CD4-positive, alpha-beta memory T cell (primary cell): ENCODE measurements at regions of chr22 and their contacts with region 1.

Region 1: DNA sequence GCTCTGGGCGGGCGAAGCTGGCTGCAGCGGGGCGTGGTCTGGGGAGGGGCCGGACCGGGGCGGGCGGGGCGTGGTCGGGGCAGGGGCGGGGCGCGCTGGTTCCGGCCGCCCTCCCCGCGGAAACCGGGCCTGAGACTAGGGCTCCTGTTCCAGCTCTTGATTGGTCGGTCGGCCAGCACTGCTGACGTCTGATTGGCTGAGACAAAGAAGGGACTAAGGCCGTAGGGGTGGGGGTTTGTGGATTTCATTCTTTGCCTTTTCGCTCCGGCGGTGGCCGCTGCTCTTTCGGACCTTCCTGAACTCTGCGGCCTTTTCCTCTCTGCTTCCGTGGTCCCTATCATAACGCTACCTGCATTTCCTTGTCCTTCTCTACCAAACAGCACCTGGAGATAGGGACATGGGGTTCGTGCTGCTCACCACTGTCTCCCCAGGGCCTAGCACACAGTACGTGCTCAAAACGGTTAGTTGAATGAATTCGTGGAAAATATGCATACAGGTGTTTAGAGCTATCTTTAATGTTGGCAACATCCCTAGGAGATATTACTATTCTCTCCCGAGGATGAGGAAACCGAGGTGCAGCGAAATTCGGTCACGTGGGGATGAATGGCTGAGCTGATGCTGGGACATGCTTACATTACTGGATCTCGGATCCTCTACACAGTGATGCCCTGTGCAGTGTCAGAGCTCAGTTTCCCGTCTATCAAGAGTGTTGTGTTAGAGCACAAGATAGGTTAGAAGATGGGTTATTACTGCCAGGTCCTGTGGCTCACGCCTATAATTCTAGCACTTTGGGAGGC is 62.8 kb downstream of the NFAM1 start:
- DNase-seq: peak; percentile 76 to 84 (median 78)
- H3K4me3 ChIP-seq: peak overlapping the region; percentile 25 to 53
- H3K4me3 Mint-ChIP-seq: peak overlapping the region; percentile 85 to 95 (median 89)
- H3K27ac ChIP-seq: peak overlapping the region; percentile 4
- H3K27ac Mint-ChIP-seq: peak overlapping the region; percentile 71 to 90 (median 84)
- H3K4me1 ChIP-seq: peaks cover 18% of the 10 kb centered on the region
- H3K4me1 Mint-ChIP-seq: peaks cover 9 to 25% (median 12%) of the 10 kb centered on the region in 4 donors
- H3K27me3 ChIP-seq: peaks cover 11% of the 10 kb centered on the region
- H3K27me3 Mint-ChIP-seq: peaks cover 7 to 18% of the 10 kb centered on the region in 2 donors

Region 2: GRCh38 chr22:42079319-42080251 is 289.9 kb before region 1 on chr22 and contains the start of gene SMDT1:
- CTCF ChIA-PET with region 1: no interaction called
- POLR2A ChIA-PET with region 1: interaction called, 10 read pairs
- intact Hi-C with region 1: no loop called
- DNase-seq: peak; percentile 98 to 99 (median 99)
- H3K4me3 ChIP-seq: peak within 1 kb of the TSS; percentile 70 to 78
- H3K4me3 Mint-ChIP-seq: peak within 1 kb of the TSS; percentile 88 to 98 (median 96)
- H3K27ac ChIP-seq: peak within 1 kb of the TSS; percentile 97
- H3K27ac Mint-ChIP-seq: peak within 1 kb of the TSS; percentile 93 to 100 (median 99)
- H3K4me1 ChIP-seq: peaks cover 38% of the 10 kb centered on the region
- H3K4me1 Mint-ChIP-seq: peaks cover 19 to 58% (median 38%) of the 10 kb centered on the region in 4 donors
- H3K27me3 ChIP-seq: no peaks in the 10 kb centered on the region
- H3K27me3 Mint-ChIP-seq: no peaks in the 10 kb centered on the region
- total RNA-seq, gene SMDT1: 101 to 105 TPM

Region 3: DNA sequence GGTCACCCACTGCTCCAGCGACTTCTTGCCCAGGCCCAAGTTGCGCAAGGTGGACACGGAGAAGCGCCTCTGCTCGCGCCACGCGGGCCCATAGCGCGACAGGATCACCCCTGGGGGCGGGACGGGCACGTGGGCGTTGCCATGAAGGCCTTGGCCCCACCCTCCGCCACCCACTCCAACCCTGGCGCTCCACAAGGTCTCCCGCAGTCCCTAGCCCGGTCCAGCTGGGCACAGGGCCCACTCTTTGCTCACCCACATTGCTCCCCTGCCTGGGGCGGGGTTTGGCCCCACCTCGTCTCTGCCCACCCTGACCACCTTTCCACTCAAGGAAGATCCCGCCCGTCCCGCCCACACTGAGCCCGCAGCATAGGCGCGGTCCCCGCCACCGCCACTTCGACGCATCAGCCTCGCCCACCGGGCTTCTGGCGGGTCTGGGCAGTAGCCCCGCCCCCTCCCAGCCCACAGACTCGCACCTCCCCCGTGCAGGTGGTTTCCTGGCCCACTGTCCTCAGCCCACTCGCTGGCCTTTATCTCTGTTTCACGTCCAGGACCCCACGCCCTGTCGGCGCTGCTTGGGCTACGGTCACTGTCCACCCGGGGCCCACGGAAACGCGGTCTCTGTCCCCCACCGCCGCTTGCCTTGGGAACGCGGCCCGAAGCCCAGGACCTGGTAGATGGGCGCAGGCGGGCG is 226.5 kb before region 1 on chr22:
- CTCF ChIA-PET with region 1: no interaction called
- POLR2A ChIA-PET with region 1: no interaction called
- intact Hi-C with region 1: no loop called
- DNase-seq: no peak
- H3K4me3 ChIP-seq: no peak overlapping the region
- H3K4me3 Mint-ChIP-seq: no peak overlapping the region
- H3K27ac ChIP-seq: no peak overlapping the region
- H3K27ac Mint-ChIP-seq: peak overlapping the region in 1 of 7 donors; percentile 51
- H3K4me1 ChIP-seq: no peaks in the 10 kb centered on the region
- H3K4me1 Mint-ChIP-seq: peaks cover 0 to 2% (median 0%) of the 10 kb centered on the region in 4 donors
- H3K27me3 ChIP-seq: no peaks in the 10 kb centered on the region
- H3K27me3 Mint-ChIP-seq: no peaks in the 10 kb centered on the region

Region 4: DNA sequence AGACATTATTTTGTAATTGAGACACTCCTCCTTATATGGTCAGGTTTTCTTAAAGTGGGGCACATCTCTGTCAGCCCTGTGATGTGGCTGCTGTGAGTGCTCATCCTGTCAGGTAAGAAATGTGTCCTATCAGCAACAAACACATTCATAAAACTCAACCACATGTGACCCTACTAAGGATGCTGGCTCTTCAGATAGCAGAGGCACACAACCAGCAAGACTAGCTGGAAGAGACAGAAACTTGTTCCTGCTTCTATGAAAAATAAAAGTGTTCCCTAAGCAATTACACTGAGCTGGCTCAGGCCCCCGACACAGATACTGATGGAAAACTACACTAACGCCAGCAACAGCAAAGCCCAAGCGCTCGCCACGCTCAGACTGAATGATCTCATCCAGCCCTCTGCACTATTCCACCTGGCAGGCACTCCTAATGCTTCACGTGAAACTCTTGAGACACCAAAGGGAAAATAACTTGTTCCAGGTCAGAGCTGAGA is 189.0 kb before region 1 on chr22:
- CTCF ChIA-PET with region 1: no interaction called
- POLR2A ChIA-PET with region 1: no interaction called
- intact Hi-C with region 1: loop called (anchors 2 kb)
- DNase-seq: peak; percentile 76 to 86 (median 84)
- H3K4me3 ChIP-seq: no peak overlapping the region
- H3K4me3 Mint-ChIP-seq: peak overlapping the region in 7 of 8 donors; percentile 55 to 89 (median 72)
- H3K27ac ChIP-seq: peak overlapping the region; percentile 58
- H3K27ac Mint-ChIP-seq: peak overlapping the region; percentile 92 to 97 (median 96)
- H3K4me1 ChIP-seq: peaks cover 90% of the 10 kb centered on the region
- H3K4me1 Mint-ChIP-seq: peaks cover 71 to 96% (median 83%) of the 10 kb centered on the region in 4 donors
- H3K27me3 ChIP-seq: no peaks in the 10 kb centered on the region
- H3K27me3 Mint-ChIP-seq: no peaks in the 10 kb centered on the region

Region 5: GRCh38 chr22:42270512-42271417 is 98.7 kb before region 1 on chr22 and contains the start of gene TCF20:
- CTCF ChIA-PET with region 1: no interaction called
- POLR2A ChIA-PET with region 1: no interaction called
- intact Hi-C with region 1: loop called (anchors 1 kb)
- DNase-seq: peak; percentile 78 to 82 (median 80)
- H3K4me3 ChIP-seq: peak within 1 kb of the TSS; percentile 26 to 80
- H3K4me3 Mint-ChIP-seq: peak within 1 kb of the TSS; percentile 88 to 95 (median 93)
- H3K27ac ChIP-seq: peak within 1 kb of the TSS; percentile 91
- H3K27ac Mint-ChIP-seq: peak within 1 kb of the TSS; percentile 87 to 95 (median 90)
- H3K4me1 ChIP-seq: peaks cover 42% of the 10 kb centered on the region
- H3K4me1 Mint-ChIP-seq: peaks cover 21 to 39% (median 29%) of the 10 kb centered on the region in 4 donors
- H3K27me3 ChIP-seq: no peaks in the 10 kb centered on the region
- H3K27me3 Mint-ChIP-seq: no peaks in the 10 kb centered on the region
- total RNA-seq, gene TCF20: 88.7 to 93.4 TPM

Region 6: DNA sequence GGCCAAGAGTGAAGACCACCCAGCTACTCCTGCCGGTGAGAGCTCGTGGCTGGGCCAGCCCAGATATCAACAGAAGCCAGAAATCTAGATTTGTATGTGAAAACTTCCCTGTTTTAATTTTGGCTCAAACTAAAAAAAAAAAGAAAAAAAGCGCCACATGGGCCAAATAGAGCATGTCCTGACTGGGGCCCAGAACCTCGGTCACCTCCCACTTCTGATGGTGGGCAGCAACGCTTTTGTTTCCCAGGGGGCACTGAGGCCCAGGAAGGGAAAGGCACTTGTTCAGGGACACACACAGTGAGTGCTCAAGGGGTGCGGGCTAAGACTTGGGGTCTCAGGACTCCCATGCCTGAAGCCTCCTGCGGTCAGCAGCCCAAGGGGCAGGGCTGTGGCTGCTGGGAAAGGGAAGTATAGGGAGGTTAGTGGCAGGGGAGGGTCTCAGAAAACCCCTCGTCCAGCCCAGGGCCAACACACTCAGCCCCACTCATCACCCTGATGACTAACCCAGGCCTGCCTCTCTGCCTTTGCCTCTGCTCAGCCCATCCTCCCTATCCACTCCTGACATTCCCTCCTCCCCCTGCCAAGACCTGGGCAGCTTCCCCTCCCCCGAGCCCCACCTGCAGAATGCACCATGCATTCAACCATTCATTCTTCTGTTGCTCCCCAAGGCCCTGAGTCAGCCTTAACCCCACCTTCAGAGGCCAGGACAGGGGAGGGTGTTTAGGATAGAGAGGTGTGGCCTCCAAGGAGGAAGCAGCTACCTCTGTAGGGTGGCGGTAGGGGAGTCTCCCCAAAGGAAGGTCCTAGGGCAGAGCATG is 69.0 kb before region 1 on chr22:
- CTCF ChIA-PET with region 1: interaction called, 3 read pairs
- POLR2A ChIA-PET with region 1: no interaction called
- intact Hi-C with region 1: loop called (anchors 2 kb)
- DNase-seq: peak in 3 of 5 donors; percentile 39 to 83 (median 48)
- H3K4me3 ChIP-seq: peak overlapping the region; percentile 23 to 54
- H3K4me3 Mint-ChIP-seq: peak overlapping the region; percentile 79 to 90 (median 83)
- H3K27ac ChIP-seq: peak overlapping the region; percentile 64
- H3K27ac Mint-ChIP-seq: peak overlapping the region; percentile 85 to 99 (median 96)
- H3K4me1 ChIP-seq: peaks cover 88% of the 10 kb centered on the region
- H3K4me1 Mint-ChIP-seq: peaks cover 56 to 96% (median 73%) of the 10 kb centered on the region in 4 donors
- H3K27me3 ChIP-seq: no peaks in the 10 kb centered on the region
- H3K27me3 Mint-ChIP-seq: no peaks in the 10 kb centered on the region

Region 7: GRCh38 chr22:42343551-42344081 is 25.8 kb before region 1 on chr22:
- CTCF ChIA-PET with region 1: no interaction called
- POLR2A ChIA-PET with region 1: no interaction called
- intact Hi-C with region 1: loop called (anchors 1 kb)
- DNase-seq: peak in 4 of 5 donors; percentile 14 to 36 (median 27)
- H3K4me3 ChIP-seq: no peak overlapping the region
- H3K4me3 Mint-ChIP-seq: no peak overlapping the region
- H3K27ac ChIP-seq: no peak overlapping the region
- H3K27ac Mint-ChIP-seq: no peak overlapping the region
- H3K4me1 ChIP-seq: peaks cover 9% of the 10 kb centered on the region
- H3K4me1 Mint-ChIP-seq: peaks cover 3 to 16% (median 10%) of the 10 kb centered on the region in 4 donors
- H3K27me3 ChIP-seq: no peaks in the 10 kb centered on the region
- H3K27me3 Mint-ChIP-seq: no peaks in the 10 kb centered on the region

Region 8: DNA sequence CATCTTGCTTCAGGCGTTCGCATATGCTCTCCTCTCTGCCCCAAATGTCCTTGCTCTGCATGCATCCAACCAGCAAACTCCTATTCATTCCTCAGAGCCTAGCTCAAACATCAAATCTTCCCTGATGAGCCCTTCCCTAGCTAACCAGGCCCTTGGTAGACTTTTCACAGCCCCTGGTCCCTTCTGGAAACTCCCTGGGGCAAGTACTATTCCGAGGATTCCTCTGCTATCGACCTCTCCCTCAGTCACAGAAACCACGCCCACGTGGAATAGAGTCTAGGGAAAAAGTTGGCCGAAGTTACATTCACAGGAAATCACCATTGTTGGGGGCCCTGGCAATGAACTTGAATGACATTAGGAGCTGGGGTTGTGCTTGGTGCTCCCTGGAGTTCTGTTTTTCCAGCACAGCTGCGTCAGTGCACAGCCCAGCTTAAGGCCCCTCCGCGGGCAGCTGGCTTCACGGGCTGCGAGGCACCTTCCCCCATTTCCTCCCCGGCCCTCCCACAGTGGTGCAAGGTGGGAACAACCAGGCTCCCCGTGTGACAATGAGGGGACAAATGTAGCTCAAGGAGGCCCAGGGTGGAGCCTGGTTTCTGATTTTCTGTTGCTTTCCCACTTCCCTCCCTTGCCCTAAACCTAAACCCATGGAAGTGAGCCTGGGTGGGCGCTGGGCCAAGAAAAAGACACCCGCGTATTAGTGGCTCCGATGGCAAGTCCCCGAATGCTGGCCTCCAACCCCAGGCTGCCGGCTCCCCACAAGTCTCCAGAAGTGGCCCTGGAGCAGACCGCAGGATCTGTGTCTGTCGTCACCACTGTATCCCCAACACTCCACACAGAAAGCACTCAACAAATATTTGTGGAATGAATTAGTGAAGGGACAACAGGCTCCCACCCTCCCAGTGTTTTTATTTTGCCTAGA is 275.2 kb after region 1 on chr22:
- CTCF ChIA-PET with region 1: no interaction called
- POLR2A ChIA-PET with region 1: no interaction called
- intact Hi-C with region 1: no loop called
- DNase-seq: no peak
- H3K4me3 ChIP-seq: no peak overlapping the region
- H3K4me3 Mint-ChIP-seq: peak overlapping the region in 1 of 8 donors; percentile 26
- H3K27ac ChIP-seq: no peak overlapping the region
- H3K27ac Mint-ChIP-seq: peak overlapping the region in 4 of 7 donors; percentile 5 to 92 (median 49)
- H3K4me1 ChIP-seq: peaks cover 47% of the 10 kb centered on the region
- H3K4me1 Mint-ChIP-seq: peaks cover 18 to 47% (median 32%) of the 10 kb centered on the region in 4 donors
- H3K27me3 ChIP-seq: no peaks in the 10 kb centered on the region
- H3K27me3 Mint-ChIP-seq: no peaks in the 10 kb centered on the region